SK-N-SH (cell line): ENCODE measurements at regions of chr16 and their contacts with region 1.

Region 1: DNA sequence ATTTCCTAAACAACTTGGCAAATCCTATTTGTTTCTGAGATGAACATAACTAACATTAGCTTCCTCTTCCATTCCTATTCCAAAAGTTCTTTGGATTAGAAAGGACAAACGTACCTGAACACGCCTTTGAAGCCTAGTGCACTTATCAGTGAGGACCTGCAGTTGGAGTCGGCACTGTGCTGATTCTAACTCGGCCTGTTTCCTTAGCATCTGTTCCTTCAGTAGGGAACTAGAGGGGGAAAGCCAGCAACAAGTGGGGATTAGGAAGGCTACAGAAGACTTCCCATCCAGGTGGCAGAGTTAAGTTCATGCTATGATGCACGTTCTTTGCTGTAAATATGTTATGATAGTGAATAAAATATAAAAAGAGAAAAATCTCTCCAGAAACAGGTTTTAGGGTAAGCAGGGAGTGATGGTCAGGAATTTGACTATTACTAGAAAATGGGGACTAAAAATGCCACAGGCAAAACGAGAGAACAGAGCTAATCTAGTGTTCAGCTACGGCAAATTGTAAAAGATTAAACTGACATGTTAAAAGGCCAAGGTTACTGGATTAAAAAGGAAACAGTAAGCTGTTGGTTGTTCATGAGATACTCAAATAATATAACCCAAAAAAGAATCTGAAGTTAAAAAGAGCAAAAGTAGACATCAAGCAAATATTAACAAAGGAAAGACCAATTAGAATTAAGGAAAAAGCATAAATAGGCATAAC is 28.8 kb downstream of the RFWD3 start:
- DNase-seq: no peak
- H3K4me3 ChIP-seq: no peak overlapping the region
- H3K27ac ChIP-seq: no peak overlapping the region
- H3K4me1 ChIP-seq: no peaks in the 10 kb centered on the region
- H3K27me3 ChIP-seq: no peaks in the 10 kb centered on the region
- CTCF ChIP-seq: no peak
- EP300 ChIP-seq: no peak
- RAD21 ChIP-seq: no peak

Region 2: DNA sequence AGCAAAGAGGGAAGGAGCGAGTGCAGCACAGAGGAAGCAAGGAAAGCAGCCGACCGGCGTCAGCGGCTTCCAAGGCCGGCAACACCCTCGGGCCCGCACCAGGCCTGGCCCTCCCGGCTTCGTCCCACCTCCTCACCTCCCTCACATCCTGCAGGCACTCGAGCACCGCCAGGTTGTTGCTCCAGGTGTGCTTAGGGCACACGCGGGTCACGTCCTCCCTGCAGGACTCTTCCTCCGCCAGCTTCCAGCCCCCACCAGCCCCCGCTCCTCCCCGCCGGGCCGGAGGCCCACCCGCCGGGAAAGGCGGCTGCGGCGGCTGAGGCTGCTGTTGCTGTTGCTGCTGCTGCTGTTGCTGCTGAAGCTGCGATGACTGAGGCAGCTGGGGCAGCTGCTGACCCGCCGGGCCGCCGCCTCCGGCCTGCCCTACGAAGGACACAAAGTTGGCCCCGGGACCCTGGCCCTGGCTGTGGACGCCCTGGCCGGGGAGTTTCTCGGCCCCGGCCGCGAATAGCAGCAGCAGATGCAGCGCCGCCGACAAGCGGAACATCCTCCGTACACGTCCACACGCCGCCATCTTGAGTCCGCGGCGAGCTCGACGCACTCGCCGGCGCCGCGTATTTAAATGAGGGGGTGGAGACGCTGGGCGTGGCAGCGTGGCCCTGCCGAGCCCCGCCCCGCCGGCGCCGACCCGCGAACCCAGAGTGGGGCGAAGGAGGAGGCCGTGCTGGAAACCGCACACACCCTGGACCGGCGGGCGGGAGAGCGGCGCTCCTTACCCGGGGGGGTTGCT is 31.2 kb before region 1 on chr16 and contains the start of gene GLG1:
- CTCF ChIA-PET with region 1: no interaction called
- POLR2A ChIA-PET with region 1: no interaction called
- DNase-seq: peak; percentile 95
- H3K4me3 ChIP-seq: peak within 1 kb of the TSS; percentile 64 to 87
- H3K27ac ChIP-seq: peak within 1 kb of the TSS; percentile 88 to 89
- H3K4me1 ChIP-seq: peaks cover 0 to 5% of the 10 kb centered on the region in 2 experiments; a peak in 3 of 4 replicates
- H3K27me3 ChIP-seq: no peaks in the 10 kb centered on the region
- CTCF ChIP-seq: no peak
- EP300 ChIP-seq: peak in 1 of 2 experiments; percentile 20; a peak in 1 of 4 replicates
- RAD21 ChIP-seq: no peak
- polyA plus RNA-seq, gene GLG1: 61.6 and 71.1 TPM in 2 replicates

Region 3: GRCh38 chr16:74650966-74651567 is 13.2 kb after region 1 on chr16:
- CTCF ChIA-PET with region 1: interaction called, 37 read pairs
- POLR2A ChIA-PET with region 1: no interaction called
- DNase-seq: peak; percentile 31
- H3K4me3 ChIP-seq: no peak overlapping the region
- H3K27ac ChIP-seq: peak overlapping the region in 1 of 2 experiments; percentile 34; a peak in 1 of 4 replicates
- H3K4me1 ChIP-seq: no peaks in the 10 kb centered on the region
- H3K27me3 ChIP-seq: no peaks in the 10 kb centered on the region
- CTCF ChIP-seq: peak; percentile 81
- EP300 ChIP-seq: no peak
- RAD21 ChIP-seq: peak; percentile 22; the same call in 1 of the 2 replicates